ENCODE measurements at regions of chr19 and their contacts with region 1.

Region 1: DNA sequence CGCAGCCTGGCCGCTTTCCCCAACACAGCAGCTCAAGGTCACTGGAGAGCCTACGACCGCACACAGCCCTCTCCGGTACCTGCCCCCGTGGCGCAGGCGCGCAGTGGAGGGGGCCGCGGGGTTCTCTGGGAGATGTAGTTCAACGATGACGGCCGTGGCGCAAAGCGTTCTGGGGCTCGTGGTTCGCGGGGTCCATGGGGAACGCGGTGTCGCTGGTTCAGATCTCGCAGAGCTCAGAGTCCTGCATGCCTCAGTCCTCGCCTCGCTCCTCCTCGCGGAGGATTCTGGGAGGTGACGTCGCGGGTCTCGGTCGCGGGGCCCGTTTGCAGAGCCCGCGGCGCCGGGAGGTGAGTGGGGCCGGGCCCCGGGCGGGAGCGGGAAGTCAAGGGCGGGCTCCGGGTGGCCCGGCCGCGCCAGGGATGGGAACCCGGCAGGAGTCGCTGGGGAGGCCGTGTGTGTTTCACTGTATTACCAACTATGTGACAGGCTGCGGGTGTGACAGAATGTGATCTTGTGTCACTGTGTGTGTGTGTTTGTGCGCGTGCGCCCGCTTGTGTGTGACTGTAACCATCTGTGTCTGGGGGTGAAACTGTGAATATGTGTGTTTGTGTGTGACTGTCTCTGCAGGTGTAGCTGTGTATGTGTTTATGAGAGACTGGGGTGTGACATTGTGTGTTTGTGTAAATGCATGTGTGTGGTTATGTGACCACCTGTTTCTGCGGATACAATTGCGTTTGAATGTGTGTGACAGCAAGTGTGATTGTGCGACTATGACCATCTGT is at the start of gene ZNF527:
- DNase-seq: peak; percentile 93
- ATAC-seq: peak; percentile 100
- H3K4me3 ChIP-seq: peak within 1 kb of the TSS; percentile 67 to 95
- H3K27ac ChIP-seq: peak within 1 kb of the TSS; percentile 93
- H3K4me1 ChIP-seq: peaks cover 4% of the 10 kb centered on the region; the same call in 1 of the 2 replicates
- H3K27me3 ChIP-seq: no peaks in the 10 kb centered on the region
- CTCF ChIP-seq: no peak
- total RNA-seq, gene ZNF527: 8.9 TPM

Region 2: DNA sequence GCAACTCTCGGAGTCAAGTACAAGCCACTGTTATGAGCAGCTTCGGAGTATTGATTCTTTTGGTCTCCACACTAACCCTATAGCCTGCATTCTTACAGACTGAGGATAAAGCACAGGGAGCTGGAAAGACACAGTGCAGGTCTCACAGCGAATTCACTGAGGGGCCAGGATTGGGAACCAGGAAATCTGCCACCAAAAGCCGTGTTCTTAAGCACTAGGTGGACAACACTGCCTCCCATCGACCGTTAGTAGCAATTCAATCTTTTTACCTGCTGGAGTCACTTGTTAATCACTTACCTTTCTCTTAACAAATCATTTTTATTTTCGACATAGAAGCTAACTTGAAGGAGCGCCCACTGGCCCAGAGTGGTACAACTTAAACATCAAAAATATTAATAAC is 1778.8 kb before region 1 on chr19:
- CTCF ChIA-PET with region 1: no interaction called
- POLR2A ChIA-PET with region 1: no interaction called
- in situ Hi-C with region 1: no loop called
- intact Hi-C with region 1: no loop called
- DNase-seq: peak; percentile 25
- ATAC-seq: no peak; the same call in 1 of the 2 replicates
- H3K4me3 ChIP-seq: no peak overlapping the region
- H3K27ac ChIP-seq: no peak overlapping the region
- H3K4me1 ChIP-seq: no peaks in the 10 kb centered on the region
- H3K27me3 ChIP-seq: no peaks in the 10 kb centered on the region
- CTCF ChIP-seq: peak; percentile 83; the same call in 1 of the 2 replicates

Region 3: GRCh38 chr19:36652958-36653357 is 718.1 kb before region 1 on chr19:
- CTCF ChIA-PET with region 1: no interaction called
- POLR2A ChIA-PET with region 1: interaction called, 11 read pairs
- in situ Hi-C with region 1: no loop called
- intact Hi-C with region 1: no loop called
- DNase-seq: no peak
- ATAC-seq: no peak
- H3K4me3 ChIP-seq: no peak overlapping the region
- H3K27ac ChIP-seq: no peak overlapping the region
- H3K4me1 ChIP-seq: no peaks in the 10 kb centered on the region
- H3K27me3 ChIP-seq: no peaks in the 10 kb centered on the region
- CTCF ChIP-seq: no peak

Region 4: DNA sequence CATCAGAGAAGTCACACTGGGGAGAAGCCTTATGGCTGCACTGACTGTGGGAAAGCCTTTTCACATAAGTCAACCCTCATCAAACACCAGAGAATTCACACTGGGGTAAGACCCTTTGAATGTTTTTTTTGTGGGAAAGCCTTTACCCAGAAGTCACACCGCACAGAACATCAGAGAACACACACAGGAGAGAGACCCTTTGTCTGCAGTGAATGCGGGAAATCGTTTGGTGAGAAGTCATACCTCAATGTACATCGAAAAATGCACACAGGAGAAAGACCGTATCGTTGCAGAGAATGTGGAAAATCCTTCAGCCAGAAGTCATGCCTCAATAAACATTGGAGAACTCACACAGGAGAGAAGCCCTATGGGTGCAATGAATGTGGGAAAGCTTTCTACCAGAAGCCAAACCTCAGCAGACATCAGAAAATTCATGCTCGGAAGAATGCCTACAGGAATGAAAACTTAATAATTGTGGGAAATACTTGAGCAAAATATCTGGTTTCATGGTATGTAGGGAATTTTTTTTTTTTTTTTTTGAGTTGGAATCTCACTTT is 166.4 kb after region 1 on chr19:
- CTCF ChIA-PET with region 1: no interaction called
- POLR2A ChIA-PET with region 1: no interaction called
- in situ Hi-C with region 1: no loop called
- intact Hi-C with region 1: no loop called
- DNase-seq: no peak
- ATAC-seq: no peak
- H3K4me3 ChIP-seq: no peak overlapping the region
- H3K27ac ChIP-seq: no peak overlapping the region
- H3K4me1 ChIP-seq: no peaks in the 10 kb centered on the region
- H3K27me3 ChIP-seq: no peaks in the 10 kb centered on the region
- CTCF ChIP-seq: no peak

Measured in Panc1 (cell line).